Posterior cingulate gyrus (tissue), 11 donors: ENCODE measurements at regions of chr12 and their contacts with region 1.

Region 1: DNA sequence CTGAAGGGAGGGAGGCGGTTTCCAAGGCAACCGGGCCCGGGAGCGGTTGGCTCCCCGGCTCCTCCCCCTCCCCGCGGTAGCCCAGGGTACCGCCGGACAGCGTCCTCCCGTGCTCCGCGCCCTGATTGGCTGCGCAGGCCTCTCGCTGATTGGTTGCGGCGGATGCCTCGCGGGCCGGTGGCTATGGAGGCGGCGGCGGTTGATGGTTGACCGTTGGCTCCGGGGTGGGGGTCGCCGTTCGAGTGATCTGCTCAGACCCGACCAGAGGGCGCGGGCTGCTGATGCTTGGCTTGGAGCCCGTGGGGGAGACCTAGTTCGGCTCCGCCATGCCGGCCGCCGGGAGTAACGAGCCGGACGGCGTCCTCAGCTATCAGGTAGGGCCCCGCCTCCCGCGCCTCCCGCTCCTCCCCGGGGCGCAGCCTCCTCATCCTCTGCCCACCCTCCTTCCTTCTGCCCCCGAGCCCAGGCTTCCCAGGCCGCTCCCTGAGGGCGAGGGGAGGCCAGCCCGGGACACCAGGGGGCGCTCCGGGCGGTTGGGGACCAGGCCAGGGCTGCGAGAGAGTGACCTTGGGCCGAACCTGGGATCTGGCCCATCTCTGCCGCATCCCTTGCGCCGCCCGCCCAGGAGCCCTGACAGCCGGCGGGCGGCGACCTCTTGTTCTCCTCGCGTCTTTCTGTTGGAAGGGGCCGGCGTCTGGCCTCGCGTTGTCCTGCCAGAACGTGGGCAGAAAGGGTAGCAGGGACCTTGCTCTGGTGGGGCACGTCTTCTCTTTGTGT is at the start of gene SLC4A8:
- DNase-seq: peak; percentile 96 to 100 (median 98)

Region 2: DNA sequence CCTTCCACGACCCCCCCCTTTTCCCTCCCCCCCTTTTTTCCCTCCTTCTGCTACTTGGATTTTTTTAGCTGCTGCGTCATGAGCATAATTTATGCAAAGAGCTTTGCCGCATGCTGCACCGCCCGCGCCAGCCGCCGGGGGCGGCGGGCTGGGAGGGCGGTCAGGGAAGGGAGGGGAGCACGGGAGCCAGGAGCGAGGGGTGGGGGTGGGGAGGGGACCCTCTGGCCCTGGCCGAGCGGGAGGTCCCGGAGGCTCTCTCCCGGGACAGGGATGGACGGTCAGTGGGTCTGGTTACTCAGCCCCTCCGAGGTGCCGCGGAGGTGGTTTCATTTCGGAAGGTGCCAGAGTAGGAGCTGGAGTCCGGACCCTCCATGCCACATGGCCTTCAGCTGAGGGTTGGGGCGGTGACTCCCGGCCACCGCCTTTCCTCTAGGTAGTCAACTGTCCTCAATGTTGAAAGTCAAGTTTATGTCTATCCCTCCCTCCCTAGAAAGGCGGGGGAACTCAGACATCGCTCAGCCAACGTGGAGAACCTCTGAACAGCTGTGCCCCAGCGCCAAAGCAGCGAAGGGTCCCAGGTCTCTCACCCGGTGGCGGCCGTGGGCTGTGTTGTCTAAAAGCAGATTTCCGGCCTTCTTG is 206.8 kb before region 1 on chr12 and contains the start of gene POU6F1:
- intact Hi-C with region 1: no loop called
- DNase-seq: peak; percentile 45 to 95 (median 62)

Region 3: GRCh38 chr12:51531978-51532497 is 107.2 kb after region 1 on chr12:
- intact Hi-C with region 1: loop called (anchors 1 kb)
- DNase-seq: peak; percentile 58 to 96 (median 82)

Region 4: DNA sequence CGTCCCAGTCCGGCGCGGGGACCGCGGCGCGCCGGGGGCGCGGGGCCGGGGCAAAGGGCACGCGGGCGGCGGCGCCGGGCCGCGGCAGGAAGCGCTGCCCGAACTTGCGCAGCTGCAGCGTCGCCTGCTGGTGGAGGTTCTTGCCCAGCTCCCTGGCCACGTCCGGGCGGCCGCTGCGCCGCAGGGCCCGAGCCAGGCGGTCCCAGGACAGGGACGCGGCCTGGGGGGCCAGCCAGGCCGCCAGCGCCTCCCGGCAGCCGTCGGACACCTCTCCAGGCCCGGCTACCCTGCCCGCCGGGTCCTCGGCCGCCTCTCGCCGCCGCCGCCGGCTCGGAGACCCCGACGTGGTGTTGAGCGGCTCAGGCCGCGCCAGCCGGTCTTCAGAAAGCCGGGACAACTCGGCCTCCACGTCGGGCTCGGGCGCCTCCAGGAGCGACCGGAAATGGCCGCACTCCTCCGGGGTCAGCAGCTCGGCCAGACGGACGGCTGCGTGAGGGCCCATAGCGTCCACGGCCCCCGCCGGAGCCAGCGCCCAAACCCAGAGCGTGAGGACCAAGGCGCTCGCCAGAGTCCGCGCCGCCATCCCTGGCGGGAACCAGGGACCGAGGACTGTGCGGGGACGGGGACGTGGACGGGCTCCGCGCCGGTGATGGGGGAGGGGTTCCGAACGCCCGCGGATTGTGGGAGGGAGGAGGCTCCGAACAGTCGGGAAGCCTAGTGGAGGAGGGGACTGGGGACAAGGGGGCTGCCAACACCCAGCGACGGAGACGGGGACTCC is 389.6 kb after region 1 on chr12:
- intact Hi-C with region 1: loop called (anchors 2 kb)
- DNase-seq: peak in 9 of 10 donors; percentile 57 to 95 (median 68)

Region 5: DNA sequence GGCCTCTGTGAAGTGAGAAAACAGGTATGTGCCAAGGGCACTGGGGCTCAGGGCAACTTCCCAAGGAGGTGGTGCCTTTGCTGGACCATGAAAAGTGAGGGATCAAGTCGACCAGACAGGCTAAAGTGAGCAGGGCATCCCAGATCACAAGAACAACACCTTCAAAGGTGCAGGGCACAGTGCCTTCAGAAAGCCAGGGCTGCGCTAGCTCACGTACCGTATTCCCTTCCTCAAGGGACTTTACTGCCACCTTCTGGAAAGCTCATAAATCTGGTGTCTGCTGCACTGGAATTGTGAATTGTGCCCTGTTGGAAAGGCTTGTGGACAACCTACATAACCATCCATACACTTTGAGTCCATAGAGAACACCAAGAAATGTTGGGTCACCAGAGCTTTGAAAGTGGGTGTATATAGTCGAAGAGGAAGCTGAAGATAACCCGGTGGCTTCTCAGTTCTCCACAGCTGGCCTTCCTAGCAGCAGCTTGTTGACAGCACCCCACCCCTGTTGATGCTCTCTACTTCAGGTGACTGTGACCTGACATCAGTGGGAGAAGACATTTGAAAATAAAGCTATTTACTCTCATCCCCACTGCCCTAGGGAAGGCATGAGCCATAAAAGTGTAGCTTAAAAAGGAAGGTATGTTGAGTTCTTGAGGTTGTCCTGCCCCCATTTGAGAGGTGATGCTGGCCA is 399.2 kb after region 1 on chr12:
- intact Hi-C with region 1: loop called (anchors 2 kb)
- DNase-seq: peak in 6 of 10 donors; percentile 35 to 91 (median 40)